Lower leg skin (tissue), 4 donors: ENCODE measurements at regions of chr2 and their contacts with region 1.

Region 1: DNA sequence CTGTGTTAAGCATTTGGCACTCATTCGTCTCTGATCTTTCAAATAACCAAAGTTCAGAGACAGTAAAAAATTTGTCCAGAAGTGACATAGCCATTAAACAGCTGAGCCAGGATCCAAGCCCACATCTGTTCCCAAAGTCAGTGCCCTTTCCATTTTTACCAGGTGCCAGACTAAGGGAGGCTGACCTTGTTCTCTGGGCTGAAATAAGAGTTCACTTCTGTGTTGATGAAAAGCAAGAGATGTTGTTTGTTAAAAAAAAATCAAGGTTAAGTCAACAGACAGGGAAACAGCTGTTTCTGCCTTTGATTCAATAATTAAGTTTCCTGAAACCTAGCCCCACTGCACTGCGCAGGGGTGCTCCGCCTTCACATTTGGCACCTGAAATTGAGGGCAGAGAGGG is 117.1 kb downstream of the PRKRA start:
- DNase-seq: no peak
- H3K4me3 ChIP-seq: no peak overlapping the region
- CTCF ChIP-seq: no peak
- POLR2A ChIP-seq: no peak

Region 2: DNA sequence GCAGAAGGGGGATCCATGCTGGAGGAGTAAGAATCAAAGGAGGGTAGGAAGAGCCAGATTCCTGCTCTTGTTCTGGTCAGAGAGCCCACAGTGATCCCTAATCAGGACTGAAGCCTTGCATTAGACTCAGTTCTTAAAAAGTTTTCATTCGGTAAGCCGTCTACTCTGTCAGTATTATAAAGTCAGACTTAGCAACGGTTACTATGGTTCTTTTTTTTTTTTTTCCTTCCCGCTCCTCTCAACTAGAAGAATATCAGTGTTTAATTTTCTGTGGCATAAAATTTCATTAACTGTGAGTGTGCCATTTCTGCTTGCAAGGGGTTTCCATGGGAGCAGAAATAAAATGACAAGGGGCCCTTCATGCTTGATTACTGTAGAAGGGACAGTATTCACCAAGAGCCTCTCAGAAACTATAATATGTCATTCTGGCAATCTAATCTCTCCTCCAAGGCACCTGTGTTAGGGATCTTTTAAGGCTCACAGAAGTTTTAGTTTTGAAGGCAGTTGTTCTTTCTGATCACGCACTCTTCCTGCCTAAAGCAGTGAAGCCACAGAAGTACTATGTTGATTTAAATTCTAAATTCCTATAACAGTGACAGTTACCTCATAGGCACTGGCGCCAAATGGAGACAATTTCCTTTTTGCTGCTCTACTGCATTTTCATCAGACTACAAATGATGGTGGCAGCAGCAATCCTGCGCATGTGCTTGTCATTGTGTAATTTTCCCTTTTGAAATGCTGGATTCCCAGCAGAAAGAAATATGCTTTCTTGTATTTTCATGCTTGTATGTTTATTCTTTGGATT is 82.5 kb before region 1 on chr2:
- intact Hi-C with region 1: no loop called
- DNase-seq: no peak
- H3K4me3 ChIP-seq: no peak overlapping the region
- CTCF ChIP-seq: no peak
- POLR2A ChIP-seq: no peak

Region 3: DNA sequence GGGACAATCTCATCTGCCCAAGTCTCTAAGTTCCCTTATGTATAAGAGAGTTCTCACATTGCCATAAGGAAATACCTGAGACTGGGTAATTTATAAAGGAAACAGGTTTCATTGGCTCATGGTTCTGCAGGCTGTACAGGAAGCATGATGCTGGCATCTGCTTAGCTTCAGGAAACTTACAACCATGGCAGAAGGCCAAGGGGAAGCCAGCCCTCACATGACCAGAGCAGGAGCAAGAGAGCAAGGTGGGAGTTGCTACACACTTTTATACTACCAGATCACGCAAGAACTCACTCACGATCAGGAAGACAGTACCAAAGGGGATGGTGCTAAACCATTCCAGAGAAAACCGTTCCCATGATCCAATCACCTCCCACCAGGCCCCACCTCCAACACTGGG is 43.2 kb after region 1 on chr2:
- intact Hi-C with region 1: loop called (anchors 1 kb)
- DNase-seq: no peak
- H3K4me3 ChIP-seq: no peak overlapping the region
- CTCF ChIP-seq: no peak
- POLR2A ChIP-seq: no peak